Transverse colon (tissue), 4 donors: ENCODE measurements at regions of chr4 and their contacts with region 1.

Region 1: GRCh38 chr4:152779513-152780266 is at the starts of genes ARFIP1 and TIGD4:
- DNase-seq: peak; percentile 98
- H3K4me3 ChIP-seq: peak within 1 kb of the TSS; percentile 66 to 78 (median 71)
- H3K27ac ChIP-seq: peak within 1 kb of the TSS; percentile 87 to 93 (median 92)
- H3K4me1 ChIP-seq: peaks cover 10 to 49% (median 26%) of the 10 kb centered on the region in 4 donors
- H3K27me3 ChIP-seq: no peaks in the 10 kb centered on the region
- CTCF ChIP-seq: peak in 3 of 5 experiments; percentile 16 to 19 (median 17)
- EP300 ChIP-seq: no peak
- POLR2A ChIP-seq: peak; percentile 83
- total RNA-seq, gene ARFIP1: 35.0 to 115 (median 46.2) TPM
- total RNA-seq, gene TIGD4: 0.14 to 0.95 (median 0.75) TPM in 3 of 4 donors, not detected in the other

Region 2: DNA sequence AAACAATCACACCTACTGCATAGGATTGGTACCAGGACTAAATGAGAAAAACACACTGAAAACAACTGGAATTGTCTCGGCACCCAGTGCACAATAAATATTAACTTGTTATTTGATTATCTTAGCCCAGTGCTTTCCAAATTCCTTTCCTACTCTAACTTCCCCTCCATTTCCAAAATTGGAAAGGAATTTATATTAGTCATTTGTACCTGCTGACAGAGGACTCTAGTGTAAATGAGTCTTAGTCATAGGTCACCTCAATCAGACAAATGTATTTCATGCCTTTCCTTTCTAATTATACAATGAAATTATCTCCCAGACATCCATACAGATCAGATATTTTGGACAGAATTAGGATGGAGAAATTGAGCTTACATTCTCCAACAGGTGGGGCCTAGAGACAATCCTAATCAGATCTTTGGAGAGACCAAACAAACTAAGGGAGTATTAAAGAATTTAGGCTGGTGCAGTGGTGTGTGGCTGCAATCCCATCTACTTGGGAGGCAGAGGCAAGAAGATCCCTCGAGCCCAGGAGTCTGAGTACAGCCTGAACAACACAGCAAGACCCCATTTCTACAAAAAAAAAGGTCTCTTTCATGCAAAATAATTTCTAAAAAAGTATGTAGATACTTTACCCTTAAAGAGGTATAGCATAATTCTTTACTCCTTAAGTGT is 1464.3 kb before region 1 on chr4:
- in situ Hi-C with region 1: no loop called
- intact Hi-C with region 1: loop called (anchors 10 kb)
- DNase-seq: no peak
- H3K4me3 ChIP-seq: no peak overlapping the region
- H3K27ac ChIP-seq: peak overlapping the region; percentile 35 to 54 (median 48)
- H3K4me1 ChIP-seq: peaks cover 11 to 66% (median 41%) of the 10 kb centered on the region in 4 donors
- H3K27me3 ChIP-seq: no peaks in the 10 kb centered on the region
- CTCF ChIP-seq: no peak
- EP300 ChIP-seq: no peak
- POLR2A ChIP-seq: no peak

Region 3: DNA sequence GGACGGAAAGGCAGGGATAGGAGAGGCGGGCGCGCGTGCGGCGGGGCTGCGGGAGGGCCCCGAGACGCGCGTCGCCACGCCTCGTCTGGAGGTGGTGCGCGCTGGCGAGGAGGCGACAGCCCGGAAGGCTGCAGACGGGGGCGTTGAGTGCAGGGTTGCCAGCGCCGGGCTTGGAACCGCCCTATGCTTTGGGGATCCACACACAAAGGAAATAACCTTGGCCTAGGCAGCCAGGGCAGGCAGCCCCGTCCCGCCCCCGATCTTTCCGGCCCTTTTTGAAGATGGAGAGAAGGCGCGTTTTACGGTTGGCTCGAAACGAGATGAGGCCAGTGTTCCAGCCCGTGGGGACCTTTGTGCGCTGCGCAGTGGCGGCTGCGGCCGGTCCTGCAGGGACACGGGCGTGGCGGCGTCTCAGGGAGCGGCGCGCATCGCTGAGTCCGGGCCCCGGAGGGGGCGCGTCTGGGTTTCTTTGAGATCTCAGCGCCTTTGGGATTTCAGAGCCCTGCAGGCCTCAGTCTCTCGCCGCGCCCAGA is 373.7 kb after region 1 on chr4:
- in situ Hi-C with region 1: no loop called
- intact Hi-C with region 1: no loop called
- DNase-seq: peak; percentile 72
- H3K4me3 ChIP-seq: peak overlapping the region; percentile 26 to 55 (median 50)
- H3K27ac ChIP-seq: peak overlapping the region; percentile 78 to 86 (median 82)
- H3K4me1 ChIP-seq: peaks cover 0 to 25% (median 21%) of the 10 kb centered on the region in 4 donors
- H3K27me3 ChIP-seq: no peaks in the 10 kb centered on the region
- CTCF ChIP-seq: peak in 2 of 5 experiments; percentile 15 to 33
- EP300 ChIP-seq: no peak
- POLR2A ChIP-seq: peak; percentile 58